ENCODE measurements at regions of chr7 and their contacts with region 1.

Region 1: DNA sequence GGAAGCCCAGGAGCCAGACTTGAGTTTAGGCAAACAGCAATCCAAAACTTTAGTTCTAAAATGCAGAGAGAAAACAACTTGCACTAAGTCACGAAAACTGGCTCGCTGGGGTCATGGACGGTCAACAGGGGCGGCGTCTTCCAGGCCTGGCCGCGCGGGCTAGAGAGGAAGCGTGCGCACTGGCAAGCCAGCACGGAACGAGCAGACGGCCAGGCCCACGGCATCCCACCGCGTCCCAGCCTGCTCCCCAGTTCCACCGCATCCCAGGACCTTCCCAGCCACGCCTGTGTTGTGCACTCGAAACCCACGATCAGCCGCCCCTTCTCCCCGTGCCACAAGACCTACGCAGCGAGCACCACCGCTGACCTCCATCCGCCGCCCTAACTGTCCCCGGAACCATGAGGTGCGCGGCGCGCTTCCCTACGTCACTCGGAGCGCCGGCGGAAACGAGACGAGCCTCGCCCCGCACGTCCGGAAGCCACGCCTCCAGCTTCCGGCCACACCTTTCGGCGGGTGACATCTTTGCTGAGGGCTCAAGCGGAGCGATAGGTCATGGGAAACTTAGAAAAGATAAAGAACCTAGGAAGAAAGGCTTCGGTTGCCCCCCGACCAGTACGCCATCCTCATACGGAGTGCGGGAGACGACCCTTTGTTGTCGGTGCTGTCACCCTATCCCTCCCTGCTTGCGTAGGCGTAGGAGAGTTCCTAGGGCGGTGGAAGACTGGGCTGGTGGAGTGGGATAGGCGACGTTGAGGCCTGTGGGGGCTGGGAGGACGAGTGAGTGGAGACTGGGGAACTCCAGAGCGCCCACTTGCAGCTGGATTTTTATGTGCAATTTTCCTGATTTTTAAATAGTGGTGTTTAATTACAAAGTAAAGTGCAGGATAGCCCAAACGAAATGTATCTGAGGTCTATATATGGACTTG is at the start of gene TBRG4:
- DNase-seq: peak; percentile 92
- H3K4me3 ChIP-seq: peak within 1 kb of the TSS; percentile 72 to 88
- H3K27ac ChIP-seq: peak within 1 kb of the TSS; percentile 78 to 90
- H3K4me1 ChIP-seq: peaks cover 5% of the 10 kb centered on the region
- H3K27me3 ChIP-seq: no peaks in the 10 kb centered on the region
- CTCF ChIP-seq: peak in 1 of 4 experiments; percentile 9
- POLR2A ChIP-seq: peak; percentile 81
- total RNA-seq, gene TBRG4: 46.4 to 76.3 TPM

Region 2: GRCh38 chr7:44581879-44582603 is 529.5 kb before region 1 on chr7 and contains the start of gene TMED4:
- intact Hi-C with region 1: loop called (anchors 10 kb)
- DNase-seq: peak; percentile 100
- H3K4me3 ChIP-seq: peak within 1 kb of the TSS; percentile 73 to 77
- H3K27ac ChIP-seq: peak within 1 kb of the TSS; percentile 92 to 95
- H3K4me1 ChIP-seq: peaks cover 4% of the 10 kb centered on the region
- H3K27me3 ChIP-seq: no peaks in the 10 kb centered on the region
- CTCF ChIP-seq: peak in 2 of 4 experiments; percentile 21 to 29
- POLR2A ChIP-seq: peak; percentile 82
- total RNA-seq, gene TMED4: 227 to 243 TPM

Region 3: DNA sequence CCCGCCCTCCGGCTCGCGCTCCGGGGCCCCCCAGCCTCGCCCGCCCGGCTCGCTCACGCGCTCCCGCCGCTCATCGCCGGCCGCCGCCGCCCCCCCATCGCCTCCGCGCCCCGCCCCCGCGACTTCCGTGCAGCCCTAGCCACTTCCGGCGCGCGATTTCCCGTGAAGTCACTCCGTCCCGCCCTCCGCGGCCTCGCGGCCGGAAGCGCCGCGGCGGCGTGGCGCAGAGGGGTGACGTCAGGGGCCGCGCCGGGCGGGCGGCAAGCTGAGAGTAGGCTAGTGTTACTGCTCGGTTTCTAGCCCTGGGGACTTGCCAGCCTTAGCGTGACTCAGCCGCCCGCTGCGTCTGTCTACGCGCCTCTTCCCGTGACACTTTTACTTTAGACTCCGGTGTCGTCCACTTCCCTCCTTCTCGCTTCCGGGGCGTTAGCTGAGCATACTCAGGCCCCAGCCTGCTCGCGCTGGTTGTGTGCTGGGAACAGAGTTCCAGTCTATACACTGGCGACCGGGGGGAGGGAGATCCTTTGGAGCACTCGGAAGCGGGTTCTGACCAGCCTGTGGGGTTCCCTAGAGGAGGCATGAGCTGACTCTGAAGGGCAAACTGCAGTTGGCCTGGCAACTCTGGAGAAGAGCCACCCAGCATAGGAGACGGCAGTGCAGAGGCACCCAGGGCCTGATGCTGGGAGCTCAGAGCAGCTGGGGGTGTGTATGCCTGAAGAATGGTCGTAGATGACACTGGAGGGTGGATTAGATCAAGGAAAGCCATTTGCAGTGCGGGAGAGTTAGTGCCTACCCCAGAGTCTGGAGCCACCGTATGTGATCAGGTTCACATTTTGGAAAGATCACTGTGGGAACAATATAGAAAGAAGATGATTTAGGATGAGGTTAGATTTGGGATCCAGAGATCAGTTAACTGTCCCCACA is 225.9 kb before region 1 on chr7 and contains the start of gene PURB:
- intact Hi-C with region 1: loop called (anchors 10 kb)
- DNase-seq: peak; percentile 94
- H3K4me3 ChIP-seq: peak within 1 kb of the TSS; percentile 87 to 93
- H3K27ac ChIP-seq: peak within 1 kb of the TSS; percentile 93 to 94
- H3K4me1 ChIP-seq: peaks cover 21% of the 10 kb centered on the region
- H3K27me3 ChIP-seq: no peaks in the 10 kb centered on the region
- CTCF ChIP-seq: peak in 1 of 4 experiments; percentile 21
- POLR2A ChIP-seq: peak; percentile 89
- total RNA-seq, gene PURB: 21.9 to 22.0 TPM

Region 4: GRCh38 chr7:44980393-44981034 is 131.0 kb before region 1 on chr7:
- intact Hi-C with region 1: loop called (anchors 5 kb)
- DNase-seq: no peak
- H3K4me3 ChIP-seq: no peak overlapping the region
- H3K27ac ChIP-seq: no peak overlapping the region
- H3K4me1 ChIP-seq: no peaks in the 10 kb centered on the region
- H3K27me3 ChIP-seq: no peaks in the 10 kb centered on the region
- CTCF ChIP-seq: no peak
- POLR2A ChIP-seq: no peak

Region 5: GRCh38 chr7:44999245-45000095 is 112.1 kb before region 1 on chr7:
- intact Hi-C with region 1: loop called (anchors 5 kb)
- DNase-seq: peak; percentile 100
- H3K4me3 ChIP-seq: peak overlapping the region; percentile 33 to 79
- H3K27ac ChIP-seq: peak overlapping the region; percentile 75 to 82
- H3K4me1 ChIP-seq: no peaks in the 10 kb centered on the region
- H3K27me3 ChIP-seq: no peaks in the 10 kb centered on the region
- CTCF ChIP-seq: peak in 1 of 4 experiments; percentile 42
- POLR2A ChIP-seq: no peak

Measured in prostate gland (tissue), 2 donors.